ENCODE measurements at regions of chr5 and their contacts with region 1.

Region 1: DNA sequence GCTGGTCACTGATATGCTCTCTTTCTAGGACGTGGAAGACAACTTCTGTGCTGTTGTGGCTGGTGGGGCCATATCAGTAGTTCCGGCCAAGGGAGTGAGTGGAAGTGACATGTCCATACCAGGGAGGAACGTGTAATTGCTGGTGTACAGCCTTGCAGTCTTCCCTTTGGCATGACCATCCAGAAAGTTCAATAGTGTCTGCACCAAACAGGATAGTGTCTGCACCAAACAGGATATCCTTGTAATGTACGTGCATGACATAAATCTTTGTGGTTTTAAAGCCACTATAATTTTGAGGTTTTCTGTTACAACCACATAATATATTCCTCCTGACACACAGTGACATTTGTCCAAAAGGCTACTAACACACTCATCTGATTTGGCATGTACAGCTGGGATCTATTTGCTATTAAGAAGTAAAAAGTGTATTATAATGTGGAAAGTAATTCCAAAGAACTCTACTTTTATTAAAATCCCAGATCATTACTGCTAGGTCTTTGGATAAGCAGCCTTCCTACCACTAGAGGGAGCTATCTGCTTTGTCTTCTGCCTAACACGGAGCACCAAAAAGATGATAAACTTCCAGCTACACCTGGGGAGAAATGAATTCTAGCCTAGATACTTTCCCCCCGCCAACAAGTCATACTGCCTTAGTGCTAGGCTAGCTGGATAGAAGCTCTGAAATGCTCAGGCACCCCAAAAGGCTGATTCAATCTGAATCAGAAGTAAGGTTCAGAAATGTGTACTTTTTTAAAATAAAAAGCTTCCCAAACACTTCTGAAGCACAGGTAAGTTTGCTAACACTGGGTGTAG is 52.7 kb downstream of the RNF145 start:
- DNase-seq: peak; percentile 59
- H3K4me3 ChIP-seq: no peak overlapping the region
- H3K27ac ChIP-seq: no peak overlapping the region
- H3K27me3 ChIP-seq: no peaks in the 10 kb centered on the region
- CTCF ChIP-seq: peak; percentile 88

Region 2: DNA sequence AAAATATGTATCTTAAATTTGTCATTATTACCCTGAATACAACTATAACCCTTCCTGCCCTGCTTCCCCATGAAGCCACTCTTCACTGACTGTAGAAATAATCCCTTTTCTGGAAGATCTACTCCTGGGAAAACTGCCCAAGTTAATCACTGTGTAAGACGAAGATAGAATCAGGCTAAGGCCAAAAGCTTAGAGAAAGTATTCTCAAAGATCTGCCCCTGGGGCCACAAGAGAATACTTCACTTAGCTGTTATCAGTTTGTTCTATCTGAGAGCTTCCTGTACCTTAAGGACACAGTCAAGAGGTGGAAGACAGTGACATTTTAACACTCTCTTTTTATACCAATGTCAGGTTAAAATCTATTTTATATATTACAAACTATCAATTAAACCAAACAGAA is 18.9 kb after region 1 on chr5:
- CTCF ChIA-PET with region 1: interaction called, 15 read pairs
- POLR2A ChIA-PET with region 1: no interaction called
- DNase-seq: no peak
- H3K4me3 ChIP-seq: no peak overlapping the region
- H3K27ac ChIP-seq: no peak overlapping the region
- H3K27me3 ChIP-seq: no peaks in the 10 kb centered on the region
- CTCF ChIP-seq: no peak

Region 3: GRCh38 chr5:159207686-159208513 is 51.3 kb after region 1 on chr5:
- CTCF ChIA-PET with region 1: interaction called, 27 read pairs
- POLR2A ChIA-PET with region 1: interaction called, 3 read pairs
- DNase-seq: peak; percentile 51
- H3K4me3 ChIP-seq: peak overlapping the region; percentile 85
- H3K27ac ChIP-seq: peak overlapping the region; percentile 95
- H3K27me3 ChIP-seq: no peaks in the 10 kb centered on the region
- CTCF ChIP-seq: no peak

Region 4: DNA sequence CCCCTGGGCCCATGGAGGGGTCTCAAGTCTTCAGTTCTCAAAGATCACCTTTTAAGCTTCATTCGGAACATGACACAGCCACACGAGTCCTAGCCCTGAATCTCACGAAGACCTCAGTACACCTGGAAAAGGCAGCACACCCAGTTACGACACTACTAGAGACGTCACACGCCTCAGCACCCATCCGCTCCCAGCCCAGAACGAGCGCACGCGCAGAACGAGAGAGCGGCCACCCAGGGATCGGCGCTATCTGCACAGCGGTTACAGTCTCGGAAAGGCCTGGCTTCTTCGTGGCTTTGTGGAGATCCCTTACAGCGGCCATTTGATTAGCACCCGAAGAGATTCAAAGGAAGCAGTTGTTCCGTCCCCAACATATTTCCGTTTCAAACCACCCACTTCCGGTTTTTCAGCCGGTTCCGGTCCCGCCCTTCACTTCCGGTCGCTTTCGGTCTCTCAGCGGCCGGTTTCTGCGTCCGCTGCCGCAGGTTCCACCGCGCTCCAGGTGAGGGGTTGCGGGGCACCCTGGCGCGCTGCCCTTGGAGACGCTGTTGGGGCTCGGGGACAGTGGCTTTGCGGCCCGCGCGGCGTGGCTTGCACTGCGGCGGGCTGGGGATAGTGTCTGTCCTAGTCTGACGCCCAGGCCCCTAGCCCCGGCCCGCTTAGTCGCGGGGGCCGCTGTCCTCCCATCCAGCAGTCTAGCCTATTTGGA is 106.4 kb after region 1 on chr5 and contains the start of gene UBLCP1:
- CTCF ChIA-PET with region 1: interaction called, 12 read pairs
- POLR2A ChIA-PET with region 1: no interaction called
- DNase-seq: peak; percentile 24
- H3K4me3 ChIP-seq: peak within 1 kb of the TSS; percentile 96
- H3K27ac ChIP-seq: peak within 1 kb of the TSS; percentile 95
- H3K27me3 ChIP-seq: no peaks in the 10 kb centered on the region
- CTCF ChIP-seq: no peak
- polyA plus RNA-seq, gene UBLCP1: 25.0 and 34.4 TPM in 2 replicates

Region 5: GRCh38 chr5:159286420-159287035 is 129.9 kb after region 1 on chr5:
- CTCF ChIA-PET with region 1: interaction called, 10 read pairs
- POLR2A ChIA-PET with region 1: no interaction called
- DNase-seq: no peak
- H3K4me3 ChIP-seq: no peak overlapping the region
- H3K27ac ChIP-seq: no peak overlapping the region
- H3K27me3 ChIP-seq: no peaks in the 10 kb centered on the region
- CTCF ChIP-seq: peak; percentile 52

Region 6: DNA sequence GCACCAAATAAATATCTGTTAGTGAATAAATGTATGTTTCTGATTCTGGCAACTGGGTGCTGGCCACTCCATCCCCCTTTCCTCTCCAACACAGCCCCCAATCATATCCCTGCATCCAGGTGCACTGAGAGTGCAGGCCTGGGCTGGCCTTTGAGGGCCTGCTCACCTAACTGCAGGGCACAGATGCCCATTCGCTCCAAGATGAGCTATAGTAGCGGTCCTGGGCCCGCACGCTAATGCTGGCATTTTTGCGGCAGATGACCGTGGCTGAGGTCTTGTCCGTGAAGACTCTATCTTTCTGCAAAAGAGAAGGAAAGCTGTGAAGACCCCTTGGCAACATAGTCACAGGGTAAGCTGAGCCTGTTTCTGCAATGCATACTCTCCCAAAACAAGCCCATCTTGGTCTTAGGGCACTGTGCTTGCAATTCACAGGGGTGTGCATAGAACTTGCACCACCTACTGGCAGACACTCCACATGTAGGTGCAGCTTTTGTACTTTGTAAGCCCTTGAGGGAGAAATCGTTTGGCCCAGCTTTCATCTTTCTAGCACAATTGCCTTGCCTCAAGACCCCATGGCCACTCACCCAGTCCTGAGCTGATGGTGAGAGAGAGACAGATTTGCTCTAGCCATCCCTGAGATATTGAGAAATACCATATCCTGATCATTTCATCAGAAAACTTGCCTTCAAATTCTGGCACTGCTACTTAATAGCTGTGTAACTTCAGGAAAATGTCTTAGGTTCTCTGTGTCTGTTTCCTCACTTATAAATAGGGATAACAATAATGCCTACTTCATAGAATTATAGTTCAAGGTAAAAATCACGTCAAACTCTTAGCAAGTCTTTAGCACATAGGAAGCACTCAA is 160.1 kb after region 1 on chr5:
- CTCF ChIA-PET with region 1: interaction called, 100 read pairs
- POLR2A ChIA-PET with region 1: no interaction called
- DNase-seq: peak; percentile 32
- H3K4me3 ChIP-seq: no peak overlapping the region
- H3K27ac ChIP-seq: no peak overlapping the region
- H3K27me3 ChIP-seq: no peaks in the 10 kb centered on the region
- CTCF ChIP-seq: peak; percentile 78

Measured in AG04450 (cell line).